ACHN (cell line): ENCODE measurements at regions of chr7 and their contacts with region 1.

Region 1: GRCh38 chr7:6260291-6261187 is 11.9 kb downstream of the CYTH3 start:
- DNase-seq: no peak

Region 2: GRCh38 chr7:6205971-6206660 is 54.4 kb before region 1 on chr7:
- in situ Hi-C with region 1: loop called (anchors 10 kb)
- DNase-seq: no peak